ENCODE measurements at regions of chr1 and their contacts with region 1.

Region 1: GRCh38 chr1:113874012-113874879 is 2.7 kb upstream of the PTPN22 start:
- DNase-seq: no peak
- CTCF ChIP-seq: peak; percentile 53

Region 2: GRCh38 chr1:113859478-113860175 is 14.6 kb before region 1 on chr1:
- CTCF ChIA-PET with region 1: interaction called, 13 read pairs
- POLR2A ChIA-PET with region 1: interaction called, 26 read pairs
- DNase-seq: peak; percentile 53
- CTCF ChIP-seq: no peak

Region 3: DNA sequence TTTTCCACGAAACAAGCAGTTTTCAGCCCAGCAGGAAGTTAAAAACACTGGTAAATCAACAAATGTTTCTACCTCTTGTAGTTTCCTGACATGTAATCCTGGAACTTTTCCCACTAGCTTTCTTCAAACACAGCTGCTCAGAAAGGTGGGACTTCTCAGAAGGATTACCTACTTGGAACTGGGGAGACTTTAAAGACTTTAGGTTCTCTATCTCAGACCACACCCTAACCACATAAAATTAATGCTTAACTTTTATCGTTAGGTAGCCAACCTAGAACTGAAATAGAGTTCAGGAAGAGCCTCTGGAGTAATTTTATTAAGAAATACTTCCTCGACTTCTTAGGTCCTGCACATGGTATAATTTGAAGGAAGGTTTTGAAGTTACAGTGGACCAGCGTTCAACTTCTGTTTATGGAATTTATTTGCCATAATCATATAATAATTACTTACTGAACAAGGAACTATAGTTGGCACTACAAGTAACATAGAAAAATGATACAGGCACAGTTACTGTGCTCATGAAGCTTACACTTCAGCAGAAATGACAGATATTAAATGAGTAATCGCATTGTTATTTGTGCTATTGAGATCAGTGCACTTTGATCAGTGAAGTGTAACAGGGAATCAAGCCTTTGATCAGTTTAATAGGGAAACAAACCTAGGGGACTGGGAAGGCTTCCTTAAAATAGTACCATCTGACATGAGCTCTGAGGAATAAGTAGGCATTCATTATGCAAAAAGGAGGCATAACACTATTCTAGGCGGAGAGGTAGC is 13.3 kb after region 1 on chr1 and contains the start of gene BCL2L15:
- CTCF ChIA-PET with region 1: interaction called, 50 read pairs
- POLR2A ChIA-PET with region 1: interaction called, 7 read pairs
- DNase-seq: no peak
- CTCF ChIP-seq: no peak

Measured in GM10248 (cell line).